PC-3 (cell line): ENCODE measurements at regions of chr12 and their contacts with region 1.

Region 1: DNA sequence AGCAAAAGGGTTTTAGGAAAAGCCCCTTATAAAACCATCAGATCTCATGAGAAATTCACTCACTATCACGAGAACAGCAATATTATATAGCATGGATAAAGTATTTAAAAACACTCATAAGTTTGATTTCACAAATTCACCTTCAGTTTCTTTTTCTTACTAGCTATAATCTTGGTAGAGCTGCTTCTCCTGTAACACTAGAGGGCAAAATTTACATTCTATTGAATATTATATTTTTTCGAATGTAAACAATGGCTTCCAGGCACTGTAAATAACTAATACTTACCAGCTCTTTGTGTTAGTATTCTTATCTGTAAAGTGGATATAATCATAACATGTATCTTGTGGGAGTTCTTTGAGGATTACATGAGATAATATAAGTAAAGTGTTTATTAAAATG is 259.6 kb downstream of the CCER1 start:
- DNase-seq: peak; percentile 56
- ATAC-seq: peak; percentile 55
- H3K4me3 ChIP-seq: peak overlapping the region; percentile 3; the same call in 1 of the 2 replicates
- H3K27ac ChIP-seq: no peak overlapping the region
- H3K4me1 ChIP-seq: no peaks in the 10 kb centered on the region
- H3K27me3 ChIP-seq: no peaks in the 10 kb centered on the region
- CTCF ChIP-seq: peak; percentile 79

Region 2: GRCh38 chr12:90589956-90590355 is 105.5 kb before region 1 on chr12:
- CTCF ChIA-PET with region 1: no interaction called
- POLR2A ChIA-PET with region 1: no interaction called
- intact Hi-C with region 1: no loop called
- DNase-seq: no peak
- ATAC-seq: no peak
- H3K4me3 ChIP-seq: no peak overlapping the region
- H3K27ac ChIP-seq: no peak overlapping the region
- H3K4me1 ChIP-seq: no peaks in the 10 kb centered on the region
- H3K27me3 ChIP-seq: no peaks in the 10 kb centered on the region
- CTCF ChIP-seq: no peak

Region 3: GRCh38 chr12:90909069-90909770 is 213.8 kb after region 1 on chr12:
- CTCF ChIA-PET with region 1: no interaction called
- POLR2A ChIA-PET with region 1: no interaction called
- intact Hi-C with region 1: loop called (anchors 1 kb)
- DNase-seq: peak; percentile 75
- ATAC-seq: peak; percentile 58
- H3K4me3 ChIP-seq: no peak overlapping the region
- H3K27ac ChIP-seq: no peak overlapping the region
- H3K4me1 ChIP-seq: 0 out of 2 replicates have a peak, but pooled peaks cover 10% of the 10 kb centered on the region
- H3K27me3 ChIP-seq: no peaks in the 10 kb centered on the region
- CTCF ChIP-seq: peak; percentile 92